HepG2 (cell line): ENCODE measurements at regions of chr3 and their contacts with region 1.

Region 1: GRCh38 chr3:120742198-120742849 is at the starts of genes GTF2E1 and RABL3:
- DNase-seq: peak; percentile 99
- ATAC-seq: peak; percentile 98
- H3K4me3 ChIP-seq: peak within 1 kb of the TSS; percentile 89 to 98 (median 90)
- H3K27ac ChIP-seq: peak within 1 kb of the TSS; percentile 98
- H3K4me1 ChIP-seq: peaks cover 29% of the 10 kb centered on the region
- H3K27me3 ChIP-seq: no peaks in the 10 kb centered on the region; a peak in 1 of 5 replicates
- CTCF ChIP-seq: no peak
- EP300 ChIP-seq: 0 out of 4 replicates have a peak, but pooled peaks of 1 of the 2 experiments have one; percentile 11
- POLR2A ChIP-seq: peak; percentile 77 to 92
- RAD21 ChIP-seq: no peak
- total RNA-seq, gene GTF2E1: 21.5 and 29.0 TPM in 2 replicates
- total RNA-seq, gene RABL3: 31.9 and 48.3 TPM in 2 replicates

Region 2: DNA sequence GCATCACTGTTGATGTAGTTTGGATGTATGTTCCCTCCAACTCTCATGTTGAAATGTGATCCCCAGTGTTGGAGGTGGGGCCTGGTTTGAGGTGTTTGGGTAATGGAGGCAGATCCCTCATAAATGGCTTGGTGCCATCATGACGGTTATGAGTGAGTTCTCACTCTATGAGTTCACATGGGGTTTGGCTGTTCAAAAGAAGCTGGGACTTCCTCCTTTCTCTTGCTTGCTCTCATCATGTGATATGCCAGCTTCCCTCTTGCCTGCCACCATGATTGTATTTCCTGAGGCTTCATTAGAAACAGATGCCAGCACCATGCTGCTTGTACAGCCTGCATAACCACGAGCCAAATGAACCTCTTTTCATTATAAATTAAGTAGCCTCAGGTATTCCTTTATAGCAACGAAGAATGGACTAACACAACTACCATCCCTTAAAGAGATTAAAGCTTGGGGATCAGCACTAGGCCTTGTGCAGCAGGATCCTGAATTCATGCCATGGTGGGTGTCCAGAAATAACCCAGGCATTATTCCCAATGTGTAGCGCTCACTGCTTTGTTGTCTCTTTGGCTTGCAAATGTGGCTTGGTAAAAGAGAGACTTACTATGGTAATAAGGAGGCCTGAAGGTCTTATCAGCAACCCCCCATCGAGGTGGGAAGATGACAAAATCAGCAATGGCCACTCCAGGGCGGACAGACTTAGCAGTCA is 104.3 kb before region 1 on chr3:
- CTCF ChIA-PET with region 1: no interaction called
- POLR2A ChIA-PET with region 1: no interaction called
- in situ Hi-C with region 1: no loop called
- intact Hi-C with region 1: loop called (anchors 5 kb)
- DNase-seq: no peak
- ATAC-seq: no peak
- H3K4me3 ChIP-seq: no peak overlapping the region
- H3K27ac ChIP-seq: no peak overlapping the region
- H3K4me1 ChIP-seq: no peaks in the 10 kb centered on the region
- H3K27me3 ChIP-seq: no peaks in the 10 kb centered on the region
- CTCF ChIP-seq: no peak
- EP300 ChIP-seq: no peak
- POLR2A ChIP-seq: no peak
- RAD21 ChIP-seq: no peak